Left ventricle myocardium superior (tissue), 1 donor: ENCODE measurements at regions of chr15 and their contacts with region 1.

Region 1: GRCh38 chr15:56491110-56491722 is 26.3 kb upstream of the MNS1 start:
- DNase-seq: peak; percentile 52
- ATAC-seq: peak; percentile 66

Region 2: GRCh38 chr15:56428821-56429458 is 62.3 kb before region 1 on chr15:
- intact Hi-C with region 1: no loop called
- DNase-seq: no peak
- ATAC-seq: no peak

Region 3: GRCh38 chr15:56869573-56869972 is 378.4 kb after region 1 on chr15:
- intact Hi-C with region 1: loop called (anchors 10 kb)
- DNase-seq: peak; percentile 53
- ATAC-seq: no peak

Region 4: GRCh38 chr15:58115692-58116091 is 1624.5 kb after region 1 on chr15:
- intact Hi-C with region 1: no loop called
- DNase-seq: no peak
- ATAC-seq: peak; percentile 34